CD4-positive, alpha-beta T cell (primary cell): ENCODE measurements at regions of chr10 and their contacts with region 1.

Region 1: DNA sequence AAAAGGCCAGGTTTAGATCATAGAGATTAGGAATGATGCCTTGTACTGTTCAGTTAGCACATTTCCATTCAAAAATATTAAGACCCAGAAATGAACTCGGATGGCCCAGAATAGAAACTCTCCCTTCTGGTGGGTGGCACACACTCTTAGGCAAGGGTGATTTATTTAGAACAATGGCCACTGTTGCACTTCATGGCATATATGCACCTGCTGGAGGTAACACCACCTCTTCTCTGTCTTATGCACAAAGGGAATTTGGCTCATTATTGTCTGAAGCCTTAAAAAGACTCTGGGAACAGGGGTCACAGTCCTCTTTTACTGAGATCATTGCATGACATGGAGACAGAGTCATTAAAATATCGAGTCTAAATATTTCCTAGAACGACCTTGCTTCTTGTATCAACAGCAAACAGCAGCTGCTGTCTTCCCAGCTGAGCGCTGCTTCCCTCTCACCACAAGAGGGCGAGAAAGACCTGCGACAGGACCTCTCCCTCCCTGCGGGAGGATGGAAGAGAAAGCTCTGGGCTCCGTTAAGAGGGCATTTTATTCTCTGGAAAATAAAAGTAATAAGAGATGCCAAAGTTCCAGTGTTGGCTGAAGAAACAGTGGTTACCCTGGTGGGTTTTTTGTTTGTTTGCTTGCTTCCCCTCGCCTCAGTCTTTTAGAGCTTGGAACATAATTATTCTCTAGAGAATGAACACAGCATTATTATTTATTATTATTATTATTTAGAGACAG is 13.6 kb upstream of the BAMBI start:
- DNase-seq: peak; percentile 47 to 81 (median 59)
- ATAC-seq: peak; percentile 89
- H3K4me3 ChIP-seq: no peak overlapping the region
- H3K4me3 Mint-ChIP-seq: no peak overlapping the region
- H3K27ac ChIP-seq: no peak overlapping the region
- H3K27ac Mint-ChIP-seq: no peak overlapping the region
- H3K4me1 ChIP-seq: peaks cover 4% of the 10 kb centered on the region
- H3K4me1 Mint-ChIP-seq: peaks cover 12% of the 10 kb centered on the region
- H3K27me3 ChIP-seq: peaks cover 24 to 35% of the 10 kb centered on the region in 2 experiments
- H3K27me3 Mint-ChIP-seq: peaks cover 68% of the 10 kb centered on the region
- CTCF ChIP-seq: peak; percentile 96

Region 2: DNA sequence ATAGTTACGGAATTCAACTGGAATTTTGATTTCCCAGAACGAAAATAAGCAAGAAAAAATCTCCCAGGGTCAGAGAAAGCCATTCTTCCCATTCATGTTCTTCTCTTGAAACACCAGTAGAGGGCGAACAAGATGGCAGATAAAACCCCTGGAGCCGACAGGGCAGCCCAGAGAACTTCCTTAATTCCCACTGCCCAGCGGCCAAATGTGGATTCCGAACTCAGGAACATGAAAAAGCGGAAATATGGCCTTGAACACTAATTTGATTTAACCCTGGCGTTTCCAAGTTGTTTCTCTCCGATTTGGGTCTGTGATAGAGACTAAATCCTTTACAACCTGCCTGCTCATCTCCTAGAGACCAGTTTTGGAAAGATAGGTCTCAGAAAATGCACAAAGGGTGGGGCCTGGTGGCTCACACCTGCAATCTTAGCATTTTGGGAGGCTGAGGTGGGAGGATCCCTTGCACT is 231.5 kb before region 1 on chr10:
- CTCF ChIA-PET with region 1: no interaction called
- POLR2A ChIA-PET with region 1: no interaction called
- intact Hi-C with region 1: loop called in 1 of 2 experiments (anchors 10 kb)
- DNase-seq: peak in 8 of 14 experiments; percentile 2 to 72 (median 16)
- ATAC-seq: peak; percentile 65
- H3K4me3 ChIP-seq: peak overlapping the region; percentile 15
- H3K4me3 Mint-ChIP-seq: peak overlapping the region; percentile 44
- H3K27ac ChIP-seq: no peak overlapping the region
- H3K27ac Mint-ChIP-seq: no peak overlapping the region
- H3K4me1 ChIP-seq: peaks cover 5% of the 10 kb centered on the region
- H3K4me1 Mint-ChIP-seq: peaks cover 8% of the 10 kb centered on the region
- H3K27me3 ChIP-seq: no peaks in the 10 kb centered on the region
- H3K27me3 Mint-ChIP-seq: peaks cover 4% of the 10 kb centered on the region
- CTCF ChIP-seq: peak; percentile 85

Region 3: GRCh38 chr10:28492116-28492920 is 171.4 kb before region 1 on chr10:
- CTCF ChIA-PET with region 1: no interaction called
- POLR2A ChIA-PET with region 1: no interaction called
- intact Hi-C with region 1: no loop called
- DNase-seq: peak in 1 of 14 experiments; percentile 6
- ATAC-seq: no peak
- H3K4me3 ChIP-seq: no peak overlapping the region
- H3K4me3 Mint-ChIP-seq: no peak overlapping the region
- H3K27ac ChIP-seq: no peak overlapping the region
- H3K27ac Mint-ChIP-seq: no peak overlapping the region
- H3K4me1 ChIP-seq: no peaks in the 10 kb centered on the region
- H3K4me1 Mint-ChIP-seq: no peaks in the 10 kb centered on the region
- H3K27me3 ChIP-seq: no peaks in the 10 kb centered on the region
- H3K27me3 Mint-ChIP-seq: peaks cover 21% of the 10 kb centered on the region
- CTCF ChIP-seq: no peak

Region 4: DNA sequence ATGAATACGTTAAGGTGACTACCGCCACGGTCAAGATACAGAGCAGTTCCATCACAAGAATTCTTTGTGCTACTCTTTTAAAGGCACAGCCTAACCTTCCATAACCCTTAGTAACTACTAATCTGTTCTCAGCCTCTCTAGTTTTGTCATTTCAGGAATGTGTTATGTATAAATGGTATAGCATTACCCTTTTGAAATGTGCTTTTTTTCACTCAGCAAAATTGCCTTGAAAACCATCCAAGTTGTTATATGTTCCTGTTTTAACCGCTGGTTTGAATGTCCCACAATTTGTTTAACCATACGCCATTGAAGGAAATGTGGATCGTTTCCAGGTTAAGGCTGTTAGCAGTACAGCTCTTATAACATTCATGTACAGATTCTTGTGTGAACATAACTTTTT is 98.8 kb before region 1 on chr10:
- CTCF ChIA-PET with region 1: no interaction called
- POLR2A ChIA-PET with region 1: no interaction called
- intact Hi-C with region 1: no loop called
- DNase-seq: no peak
- ATAC-seq: no peak
- H3K4me3 ChIP-seq: no peak overlapping the region
- H3K4me3 Mint-ChIP-seq: peak overlapping the region; percentile 40
- H3K27ac ChIP-seq: no peak overlapping the region
- H3K27ac Mint-ChIP-seq: peak overlapping the region; percentile 28
- H3K4me1 ChIP-seq: peaks cover 38% of the 10 kb centered on the region
- H3K4me1 Mint-ChIP-seq: peaks cover 95% of the 10 kb centered on the region
- H3K27me3 ChIP-seq: no peaks in the 10 kb centered on the region
- H3K27me3 Mint-ChIP-seq: no peaks in the 10 kb centered on the region
- CTCF ChIP-seq: no peak

Region 5: DNA sequence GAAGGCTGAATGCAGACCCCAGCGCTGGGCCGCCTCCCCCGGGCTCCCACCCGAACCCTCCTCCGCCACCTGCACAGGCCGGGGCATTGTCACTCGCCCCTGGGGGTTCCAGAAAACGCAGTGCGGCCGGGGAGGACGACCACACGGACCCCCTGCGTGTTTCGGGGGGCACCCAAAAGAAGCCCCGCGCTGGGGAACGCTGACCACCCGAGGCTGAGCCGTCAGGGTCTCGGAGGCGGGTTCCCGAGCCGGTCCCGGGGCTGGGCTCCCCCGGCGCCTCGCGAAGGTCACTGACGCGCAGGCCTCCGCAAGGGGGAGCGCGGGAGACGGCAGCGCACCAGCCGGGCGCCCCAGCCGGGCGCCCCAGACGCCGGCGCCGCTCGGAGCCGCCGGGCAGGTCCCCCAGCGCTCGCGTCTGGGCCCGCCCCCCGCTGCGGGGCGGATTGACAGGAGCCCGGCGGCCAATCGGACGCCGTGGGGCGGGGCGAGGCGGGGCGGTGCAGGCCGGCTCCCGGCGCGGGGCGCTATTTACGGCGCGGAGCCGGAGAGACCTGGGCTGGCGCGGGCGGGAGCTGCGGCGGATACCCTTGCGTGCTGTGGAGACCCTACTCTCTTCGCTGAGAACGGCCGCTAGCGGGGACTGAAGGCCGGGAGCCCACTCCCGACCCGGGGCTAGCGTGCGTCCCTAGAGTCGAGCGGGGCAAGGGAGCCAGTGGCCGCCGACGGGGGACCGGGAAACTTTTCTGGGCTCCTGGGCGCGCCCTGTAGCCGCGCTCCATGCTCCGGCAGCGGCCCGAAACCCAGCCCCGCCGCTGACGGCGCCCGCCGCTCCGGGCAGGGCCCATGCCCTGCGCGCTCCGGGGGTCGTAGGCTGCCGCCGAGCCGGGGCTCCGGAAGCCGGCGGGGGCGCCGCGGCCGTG is 13.5 kb after region 1 on chr10 and contains the start of gene BAMBI:
- CTCF ChIA-PET with region 1: interaction called, 12 read pairs
- POLR2A ChIA-PET with region 1: no interaction called
- intact Hi-C with region 1: no loop called
- DNase-seq: peak; percentile 72 to 96 (median 86)
- ATAC-seq: peak; percentile 96
- H3K4me3 ChIP-seq: peak within 1 kb of the TSS; percentile 59
- H3K4me3 Mint-ChIP-seq: peak within 1 kb of the TSS; percentile 85
- H3K27ac ChIP-seq: no peak within 1 kb of the TSS
- H3K27ac Mint-ChIP-seq: no peak within 1 kb of the TSS
- H3K4me1 ChIP-seq: peaks cover 27% of the 10 kb centered on the region
- H3K4me1 Mint-ChIP-seq: peaks cover 31% of the 10 kb centered on the region
- H3K27me3 ChIP-seq: peaks cover 48 to 70% of the 10 kb centered on the region in 2 experiments
- H3K27me3 Mint-ChIP-seq: peaks cover 82% of the 10 kb centered on the region
- CTCF ChIP-seq: peak; percentile 62
- total RNA-seq, gene BAMBI: 2.5 to 2.9 TPM

Region 6: GRCh38 chr10:28991326-28992270 is 327.9 kb after region 1 on chr10:
- CTCF ChIA-PET with region 1: interaction called, 10 read pairs
- POLR2A ChIA-PET with region 1: no interaction called
- intact Hi-C with region 1: loop called (anchors 1 to 5 kb)
- DNase-seq: peak in 9 of 14 experiments; percentile 3 to 53 (median 28)
- ATAC-seq: no peak
- H3K4me3 ChIP-seq: no peak overlapping the region
- H3K4me3 Mint-ChIP-seq: no peak overlapping the region
- H3K27ac ChIP-seq: no peak overlapping the region
- H3K27ac Mint-ChIP-seq: no peak overlapping the region
- H3K4me1 ChIP-seq: no peaks in the 10 kb centered on the region
- H3K4me1 Mint-ChIP-seq: no peaks in the 10 kb centered on the region
- H3K27me3 ChIP-seq: no peaks in the 10 kb centered on the region
- H3K27me3 Mint-ChIP-seq: peaks cover 5% of the 10 kb centered on the region
- CTCF ChIP-seq: no peak

Region 7: DNA sequence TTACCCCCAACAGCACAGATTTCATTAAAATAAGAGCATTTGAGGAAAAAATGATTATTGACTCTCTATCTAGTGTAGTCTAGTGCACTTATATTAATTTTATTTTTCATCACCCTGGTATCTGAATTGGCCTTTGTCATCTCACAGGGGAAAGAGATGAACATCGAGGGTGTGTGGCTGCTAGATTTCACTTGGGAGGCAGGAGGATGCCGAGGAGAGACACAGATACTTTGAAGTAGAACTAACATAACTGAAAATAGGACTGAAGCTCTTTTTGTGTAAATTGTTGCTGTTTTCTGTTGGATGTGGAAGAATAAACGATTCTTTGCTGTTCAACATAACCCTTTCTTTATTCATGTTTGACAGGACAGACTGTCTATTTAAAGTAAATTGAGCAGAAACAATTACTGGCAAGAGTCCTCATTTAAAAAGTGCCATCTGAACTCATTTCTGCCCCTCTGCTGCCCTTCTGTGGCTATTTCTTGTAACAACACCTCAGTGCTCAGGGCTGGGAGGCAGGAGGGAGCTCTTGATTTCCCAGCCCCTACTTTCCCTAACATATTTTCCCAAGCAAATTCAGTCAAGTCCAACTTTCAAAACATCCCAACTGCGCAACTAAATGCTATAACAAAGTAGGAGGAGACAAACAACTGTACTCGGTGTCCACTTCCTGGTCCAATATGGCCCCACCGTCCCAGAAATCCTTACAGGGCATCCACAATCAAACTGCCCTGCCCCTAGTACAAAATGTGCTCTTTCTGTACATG is 640.7 kb after region 1 on chr10:
- CTCF ChIA-PET with region 1: interaction called, 4 read pairs
- POLR2A ChIA-PET with region 1: no interaction called
- intact Hi-C with region 1: loop called in 1 of 2 experiments (anchors 5 kb)
- DNase-seq: peak in 7 of 14 experiments; percentile 1 to 50 (median 20)
- ATAC-seq: no peak
- H3K4me3 ChIP-seq: no peak overlapping the region
- H3K4me3 Mint-ChIP-seq: no peak overlapping the region
- H3K27ac ChIP-seq: no peak overlapping the region
- H3K27ac Mint-ChIP-seq: no peak overlapping the region
- H3K4me1 ChIP-seq: no peaks in the 10 kb centered on the region
- H3K4me1 Mint-ChIP-seq: no peaks in the 10 kb centered on the region
- H3K27me3 ChIP-seq: peaks cover 0 to 10% of the 10 kb centered on the region in 2 experiments
- H3K27me3 Mint-ChIP-seq: peaks cover 41% of the 10 kb centered on the region
- CTCF ChIP-seq: peak; percentile 53

Region 8: DNA sequence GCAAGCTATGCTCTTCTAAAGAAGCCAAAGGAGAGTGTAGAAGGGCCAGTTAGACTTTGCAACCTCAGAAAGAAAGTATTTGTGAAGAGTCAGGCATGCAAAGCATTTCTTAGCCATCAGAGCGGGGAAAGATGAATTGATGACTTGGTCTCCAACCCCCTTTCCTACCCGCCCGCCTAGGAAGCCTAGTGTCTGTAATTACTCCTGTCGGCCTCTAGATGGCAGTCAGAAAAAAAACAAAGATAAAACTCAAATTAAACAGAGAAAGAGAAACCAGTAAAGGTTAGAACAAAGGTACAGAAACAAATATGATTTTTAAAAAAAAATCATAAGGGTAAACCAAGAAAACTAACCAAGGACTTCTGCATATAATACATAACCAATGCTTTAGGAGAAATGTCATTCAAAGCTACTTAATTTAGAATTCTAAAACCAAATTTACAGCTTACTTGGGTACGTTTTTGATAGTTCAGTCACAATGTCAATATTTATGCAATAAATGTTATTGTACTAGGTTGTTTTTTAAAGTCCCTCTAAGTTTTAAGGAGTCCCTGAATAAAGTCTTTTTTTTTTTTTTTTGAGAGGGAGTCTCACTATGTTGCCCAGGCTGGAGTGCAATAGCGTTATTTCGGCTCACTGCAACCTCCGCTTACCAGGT is 722.7 kb after region 1 on chr10:
- CTCF ChIA-PET with region 1: no interaction called
- POLR2A ChIA-PET with region 1: no interaction called
- intact Hi-C with region 1: loop called in 1 of 2 experiments (anchors 10 kb)
- DNase-seq: peak in 4 of 14 experiments; percentile 16 to 56 (median 48)
- ATAC-seq: peak; percentile 58
- H3K4me3 ChIP-seq: no peak overlapping the region
- H3K4me3 Mint-ChIP-seq: no peak overlapping the region
- H3K27ac ChIP-seq: no peak overlapping the region
- H3K27ac Mint-ChIP-seq: no peak overlapping the region
- H3K4me1 ChIP-seq: no peaks in the 10 kb centered on the region
- H3K4me1 Mint-ChIP-seq: peaks cover 3% of the 10 kb centered on the region
- H3K27me3 ChIP-seq: peaks cover 0 to 6% of the 10 kb centered on the region in 2 experiments
- H3K27me3 Mint-ChIP-seq: peaks cover 8% of the 10 kb centered on the region
- CTCF ChIP-seq: peak; percentile 89

Region 9: GRCh38 chr10:29446327-29446726 is 782.6 kb after region 1 on chr10:
- CTCF ChIA-PET with region 1: interaction called, 4 read pairs
- POLR2A ChIA-PET with region 1: no interaction called
- intact Hi-C with region 1: loop called (anchors 5 kb)
- DNase-seq: no peak
- ATAC-seq: no peak
- H3K4me3 ChIP-seq: no peak overlapping the region
- H3K4me3 Mint-ChIP-seq: no peak overlapping the region
- H3K27ac ChIP-seq: no peak overlapping the region
- H3K27ac Mint-ChIP-seq: no peak overlapping the region
- H3K4me1 ChIP-seq: peaks cover 6% of the 10 kb centered on the region
- H3K4me1 Mint-ChIP-seq: peaks cover 9% of the 10 kb centered on the region
- H3K27me3 ChIP-seq: no peaks in the 10 kb centered on the region
- H3K27me3 Mint-ChIP-seq: no peaks in the 10 kb centered on the region
- CTCF ChIP-seq: no peak